Body of pancreas (tissue), 4 donors: ENCODE measurements at regions of chr10 and their contacts with region 1.

Region 1: GRCh38 chr10:52313933-52314816 is at the start of gene DKK1:
- DNase-seq: peak; percentile 53 to 75 (median 66)
- ATAC-seq: peak; percentile 86
- H3K4me3 ChIP-seq: peak within 1 kb of the TSS; percentile 19 to 33
- H3K27ac ChIP-seq: no peak within 1 kb of the TSS
- H3K4me1 ChIP-seq: peaks cover 18% of the 10 kb centered on the region
- H3K27me3 ChIP-seq: peaks cover 0 to 8% of the 10 kb centered on the region in 2 donors
- CTCF ChIP-seq: peak; percentile 51 to 74 (median 65)
- POLR2A ChIP-seq: no peak
- total RNA-seq, gene DKK1: not detected

Region 2: DNA sequence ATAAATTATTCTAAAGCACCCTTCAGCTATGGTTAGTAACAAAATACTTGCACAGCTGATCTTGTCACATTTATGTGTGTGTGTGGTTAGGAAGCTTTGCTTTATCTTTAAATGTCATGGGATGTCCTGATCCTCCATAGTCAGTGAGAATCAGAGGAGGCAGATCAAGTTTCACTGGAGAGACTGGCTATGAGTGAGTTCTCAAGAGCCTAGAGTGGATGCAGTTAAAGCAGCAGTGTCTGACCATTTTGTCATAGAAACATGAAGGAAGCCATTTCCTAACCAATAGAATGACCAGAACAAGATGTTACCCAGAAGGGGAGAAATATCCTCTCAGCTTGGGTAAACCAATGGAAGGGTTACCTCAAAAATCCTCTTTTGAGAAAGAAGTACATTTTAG is 207.3 kb before region 1 on chr10:
- intact Hi-C with region 1: no loop called
- DNase-seq: no peak
- ATAC-seq: no peak
- H3K4me3 ChIP-seq: no peak overlapping the region
- H3K27ac ChIP-seq: no peak overlapping the region
- H3K4me1 ChIP-seq: no peaks in the 10 kb centered on the region
- H3K27me3 ChIP-seq: no peaks in the 10 kb centered on the region
- CTCF ChIP-seq: no peak
- POLR2A ChIP-seq: no peak

Region 3: DNA sequence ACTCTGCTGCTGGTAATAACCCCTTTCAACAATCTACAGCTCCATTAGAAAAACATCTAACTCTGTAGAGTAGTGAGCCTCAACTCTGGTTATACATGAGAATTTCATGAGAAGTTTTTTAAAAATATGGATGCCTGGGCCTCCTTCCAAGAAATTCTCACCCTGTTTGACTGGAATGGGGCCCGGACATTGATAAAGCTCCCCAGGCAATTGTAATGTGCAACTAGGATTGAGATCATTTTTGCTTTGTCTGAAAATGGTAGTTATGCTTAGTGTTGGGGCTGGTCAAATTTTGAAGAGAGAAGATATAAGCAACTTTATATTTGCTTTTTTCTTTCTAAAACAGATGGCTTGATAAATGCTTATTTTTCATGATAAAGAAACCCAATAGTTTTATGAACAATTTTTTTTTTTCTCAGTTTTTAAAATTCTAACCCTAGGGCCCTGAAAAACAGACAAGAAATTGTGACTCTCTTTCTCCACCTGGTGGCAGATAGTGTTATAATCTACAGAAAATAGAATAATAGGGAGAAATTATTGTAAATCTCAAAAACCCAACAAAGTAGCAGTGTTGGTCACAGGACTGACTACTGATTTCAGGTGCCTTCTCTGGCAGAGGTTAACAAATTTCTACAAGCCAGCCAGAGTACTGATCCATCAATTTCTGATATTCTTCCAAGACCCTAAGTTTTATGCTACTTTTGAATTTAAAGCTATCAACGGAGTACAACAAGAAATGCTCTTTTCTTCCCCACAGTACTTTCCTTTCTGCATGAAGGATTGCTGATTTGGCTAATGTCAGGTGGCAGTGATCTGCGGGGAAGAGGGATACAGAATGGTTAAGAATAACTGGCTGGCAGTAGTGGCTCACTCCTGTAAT is 174.7 kb after region 1 on chr10:
- intact Hi-C with region 1: loop called (anchors 5 kb)
- DNase-seq: no peak
- ATAC-seq: no peak
- H3K4me3 ChIP-seq: no peak overlapping the region
- H3K27ac ChIP-seq: no peak overlapping the region
- H3K4me1 ChIP-seq: no peaks in the 10 kb centered on the region
- H3K27me3 ChIP-seq: no peaks in the 10 kb centered on the region
- CTCF ChIP-seq: peak; percentile 12 to 59 (median 54)
- POLR2A ChIP-seq: no peak